B cell (primary cell): ENCODE measurements at regions of chr12 and their contacts with region 1.

Region 1: GRCh38 chr12:110468212-110469048 is at the starts of genes FAM216A and GPN3:
- DNase-seq: peak; percentile 97
- ATAC-seq: peak; percentile 91
- H3K4me3 ChIP-seq: peak within 1 kb of the TSS; percentile 72 to 100 (median 95)
- H3K4me3 Mint-ChIP-seq: peak within 1 kb of the TSS; percentile 100
- H3K27ac ChIP-seq: peak within 1 kb of the TSS; percentile 69 to 79
- H3K27ac Mint-ChIP-seq: peak within 1 kb of the TSS; percentile 98
- H3K4me1 ChIP-seq: peaks cover 22 to 24% of the 10 kb centered on the region in 2 donors
- H3K4me1 Mint-ChIP-seq: peaks cover 42% of the 10 kb centered on the region
- H3K27me3 ChIP-seq: no peaks in the 10 kb centered on the region
- H3K27me3 Mint-ChIP-seq: no peaks in the 10 kb centered on the region
- CTCF ChIP-seq: no peak
- total RNA-seq, gene FAM216A: 15.4 and 15.7 TPM in 2 replicates
- total RNA-seq, gene GPN3: 12.3 and 13.4 TPM in 2 replicates

Region 2: GRCh38 chr12:110367181-110367864 is 101.1 kb before region 1 on chr12:
- CTCF ChIA-PET with region 1: no interaction called
- POLR2A ChIA-PET with region 1: no interaction called
- intact Hi-C with region 1: no loop called
- DNase-seq: no peak
- ATAC-seq: no peak
- H3K4me3 ChIP-seq: no peak overlapping the region
- H3K4me3 Mint-ChIP-seq: peak overlapping the region; percentile 50
- H3K27ac ChIP-seq: no peak overlapping the region
- H3K27ac Mint-ChIP-seq: peak overlapping the region; percentile 61
- H3K4me1 ChIP-seq: peaks cover 18 to 30% of the 10 kb centered on the region in 2 donors
- H3K4me1 Mint-ChIP-seq: peaks cover 40% of the 10 kb centered on the region
- H3K27me3 ChIP-seq: no peaks in the 10 kb centered on the region
- H3K27me3 Mint-ChIP-seq: no peaks in the 10 kb centered on the region
- CTCF ChIP-seq: no peak

Region 3: GRCh38 chr12:110501752-110502738 is 33.6 kb after region 1 on chr12 and contains the starts of genes RAD9B and VPS29:
- CTCF ChIA-PET with region 1: interaction called, 25 read pairs
- POLR2A ChIA-PET with region 1: interaction called, 10 read pairs
- intact Hi-C with region 1: loop called (anchors 1 kb)
- DNase-seq: peak; percentile 99
- ATAC-seq: peak; percentile 94
- H3K4me3 ChIP-seq: peak within 1 kb of the TSS; percentile 90 to 99 (median 95)
- H3K4me3 Mint-ChIP-seq: peak within 1 kb of the TSS; percentile 93
- H3K27ac ChIP-seq: peak within 1 kb of the TSS; percentile 85 to 90
- H3K27ac Mint-ChIP-seq: peak within 1 kb of the TSS; percentile 96
- H3K4me1 ChIP-seq: peaks cover 19 to 20% of the 10 kb centered on the region in 2 donors
- H3K4me1 Mint-ChIP-seq: peaks cover 29% of the 10 kb centered on the region
- H3K27me3 ChIP-seq: no peaks in the 10 kb centered on the region
- H3K27me3 Mint-ChIP-seq: no peaks in the 10 kb centered on the region
- CTCF ChIP-seq: no peak
- total RNA-seq, gene RAD9B: 1.5 and 1.7 TPM in 2 replicates
- total RNA-seq, gene VPS29: 117 and 118 TPM in 2 replicates

Region 4: GRCh38 chr12:110508071-110508586 is 39.7 kb after region 1 on chr12:
- CTCF ChIA-PET with region 1: interaction called, 25 read pairs
- POLR2A ChIA-PET with region 1: interaction called, 4 read pairs
- intact Hi-C with region 1: loop called (anchors 1 kb)
- DNase-seq: no peak
- ATAC-seq: no peak
- H3K4me3 ChIP-seq: no peak overlapping the region
- H3K4me3 Mint-ChIP-seq: no peak overlapping the region
- H3K27ac ChIP-seq: no peak overlapping the region
- H3K27ac Mint-ChIP-seq: no peak overlapping the region
- H3K4me1 ChIP-seq: no peaks in the 10 kb centered on the region
- H3K4me1 Mint-ChIP-seq: no peaks in the 10 kb centered on the region
- H3K27me3 ChIP-seq: no peaks in the 10 kb centered on the region
- H3K27me3 Mint-ChIP-seq: no peaks in the 10 kb centered on the region
- CTCF ChIP-seq: no peak

Region 5: GRCh38 chr12:110606253-110606611 is 137.8 kb after region 1 on chr12:
- CTCF ChIA-PET with region 1: interaction called, 80 read pairs
- POLR2A ChIA-PET with region 1: interaction called, 15 read pairs
- intact Hi-C with region 1: loop called (anchors 1 kb)
- DNase-seq: peak; percentile 43
- ATAC-seq: no peak
- H3K4me3 ChIP-seq: peak overlapping the region; percentile 7 to 74 (median 55)
- H3K4me3 Mint-ChIP-seq: peak overlapping the region; percentile 77
- H3K27ac ChIP-seq: peak overlapping the region; percentile 77 to 94
- H3K27ac Mint-ChIP-seq: peak overlapping the region; percentile 88
- H3K4me1 ChIP-seq: peaks cover 71 to 83% of the 10 kb centered on the region in 2 donors
- H3K4me1 Mint-ChIP-seq: peaks cover 65% of the 10 kb centered on the region
- H3K27me3 ChIP-seq: no peaks in the 10 kb centered on the region
- H3K27me3 Mint-ChIP-seq: no peaks in the 10 kb centered on the region
- CTCF ChIP-seq: no peak

Region 6: GRCh38 chr12:110613771-110614684 is 145.6 kb after region 1 on chr12 and contains the start of gene TCTN1:
- CTCF ChIA-PET with region 1: interaction called, 10 read pairs
- POLR2A ChIA-PET with region 1: no interaction called
- intact Hi-C with region 1: no loop called
- DNase-seq: peak; percentile 94
- ATAC-seq: peak; percentile 99
- H3K4me3 ChIP-seq: peak within 1 kb of the TSS; percentile 57 to 84 (median 70)
- H3K4me3 Mint-ChIP-seq: peak within 1 kb of the TSS; percentile 91
- H3K27ac ChIP-seq: peak within 1 kb of the TSS; percentile 83 to 98
- H3K27ac Mint-ChIP-seq: peak within 1 kb of the TSS; percentile 96
- H3K4me1 ChIP-seq: peaks cover 42 to 65% of the 10 kb centered on the region in 2 donors
- H3K4me1 Mint-ChIP-seq: peaks cover 49% of the 10 kb centered on the region
- H3K27me3 ChIP-seq: no peaks in the 10 kb centered on the region
- H3K27me3 Mint-ChIP-seq: no peaks in the 10 kb centered on the region
- CTCF ChIP-seq: no peak
- total RNA-seq, gene TCTN1: 69.8 and 74.5 TPM in 2 replicates

Region 7: DNA sequence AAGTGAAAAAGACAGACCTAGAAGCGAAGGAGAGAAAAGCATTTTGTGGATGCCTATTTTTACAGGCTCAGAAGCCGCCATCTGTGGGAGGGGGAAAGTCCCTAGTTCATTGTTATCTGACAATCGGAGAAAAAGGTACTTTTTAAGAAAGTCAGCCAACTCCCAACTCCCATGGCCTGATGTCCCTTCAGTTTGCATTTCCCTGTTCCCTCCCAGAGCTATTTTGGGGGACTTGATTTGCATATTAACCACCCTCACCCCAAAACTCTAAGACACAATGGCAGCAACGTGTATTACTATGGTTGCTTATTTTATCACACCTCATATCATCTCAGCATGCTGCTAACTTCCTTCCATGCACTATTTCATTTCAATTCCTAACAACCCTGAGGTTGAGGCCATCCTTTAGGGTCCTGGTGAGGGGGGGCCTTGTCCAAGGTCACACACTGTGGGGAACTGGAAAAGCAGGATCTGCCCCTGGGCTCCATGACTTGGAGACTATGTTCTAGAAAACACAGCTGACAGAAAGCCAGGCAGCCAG is 201.8 kb after region 1 on chr12:
- CTCF ChIA-PET with region 1: no interaction called
- POLR2A ChIA-PET with region 1: no interaction called
- intact Hi-C with region 1: no loop called
- DNase-seq: peak; percentile 84
- ATAC-seq: peak; percentile 46
- H3K4me3 ChIP-seq: peak overlapping the region in 1 of 5 experiments; percentile 15
- H3K4me3 Mint-ChIP-seq: peak overlapping the region; percentile 84
- H3K27ac ChIP-seq: peak overlapping the region; percentile 84 to 99
- H3K27ac Mint-ChIP-seq: peak overlapping the region; percentile 96
- H3K4me1 ChIP-seq: peaks cover 91 to 100% of the 10 kb centered on the region in 2 donors
- H3K4me1 Mint-ChIP-seq: peaks cover 86% of the 10 kb centered on the region
- H3K27me3 ChIP-seq: no peaks in the 10 kb centered on the region
- H3K27me3 Mint-ChIP-seq: no peaks in the 10 kb centered on the region
- CTCF ChIP-seq: no peak

Region 8: DNA sequence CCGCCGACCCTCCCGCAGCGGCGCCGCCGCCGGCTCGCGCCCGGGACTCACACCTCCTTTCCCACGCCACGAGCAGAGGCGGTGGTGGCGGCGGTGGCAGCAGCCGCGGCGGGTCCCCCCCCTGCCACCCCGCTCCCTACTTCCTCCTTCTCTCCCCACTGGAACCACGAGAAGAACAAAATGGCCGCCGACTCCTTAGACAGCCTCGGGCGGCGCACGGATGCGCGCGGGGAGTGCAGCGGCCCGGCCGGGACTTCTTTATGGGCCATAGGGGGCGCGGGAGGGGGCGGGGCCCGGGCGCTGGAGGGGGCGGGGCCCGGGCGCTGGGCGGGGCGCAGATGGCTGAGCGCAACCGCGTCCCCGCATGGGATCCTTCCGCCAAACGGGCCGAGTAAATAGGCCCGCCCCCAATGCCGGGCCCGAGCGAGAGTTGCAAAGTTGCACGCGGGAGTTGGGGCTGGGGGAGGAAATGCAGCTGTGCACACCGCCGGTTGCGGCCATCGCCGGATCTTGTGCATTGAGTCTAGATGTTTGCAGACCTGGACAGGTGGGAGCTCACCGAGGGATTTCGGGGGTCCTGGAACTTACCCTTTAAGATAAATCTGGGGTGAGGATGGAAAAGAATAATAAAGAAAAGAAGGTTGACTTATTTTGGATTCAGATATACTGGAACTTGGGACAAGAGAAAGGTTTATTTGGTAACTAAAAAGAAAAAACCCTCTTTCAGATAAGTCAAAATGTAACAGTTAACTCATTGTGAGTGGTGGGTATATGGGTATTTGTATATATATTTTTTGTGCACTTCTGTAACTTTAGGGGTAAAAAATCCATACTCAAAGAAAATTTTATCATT is 274.5 kb after region 1 on chr12 and contains the start of gene PPP1CC:
- CTCF ChIA-PET with region 1: no interaction called
- POLR2A ChIA-PET with region 1: no interaction called
- intact Hi-C with region 1: loop called (anchors 1 kb)
- DNase-seq: peak; percentile 97
- ATAC-seq: peak; percentile 95
- H3K4me3 ChIP-seq: peak within 1 kb of the TSS; percentile 86 to 94 (median 92)
- H3K4me3 Mint-ChIP-seq: peak within 1 kb of the TSS; percentile 99
- H3K27ac ChIP-seq: peak within 1 kb of the TSS; percentile 31 to 78
- H3K27ac Mint-ChIP-seq: peak within 1 kb of the TSS; percentile 95
- H3K4me1 ChIP-seq: peaks cover 32 to 36% of the 10 kb centered on the region in 2 donors
- H3K4me1 Mint-ChIP-seq: peaks cover 40% of the 10 kb centered on the region
- H3K27me3 ChIP-seq: no peaks in the 10 kb centered on the region
- H3K27me3 Mint-ChIP-seq: no peaks in the 10 kb centered on the region
- CTCF ChIP-seq: no peak
- total RNA-seq, gene PPP1CC: 146 and 150 TPM in 2 replicates

Region 9: GRCh38 chr12:110888256-110888991 is 420.0 kb after region 1 on chr12:
- CTCF ChIA-PET with region 1: interaction called, 14 read pairs
- POLR2A ChIA-PET with region 1: no interaction called
- intact Hi-C with region 1: loop called (anchors 1 kb)
- DNase-seq: no peak
- ATAC-seq: no peak
- H3K4me3 ChIP-seq: peak overlapping the region in 1 of 5 experiments; percentile 62
- H3K4me3 Mint-ChIP-seq: peak overlapping the region; percentile 95
- H3K27ac ChIP-seq: no peak overlapping the region
- H3K27ac Mint-ChIP-seq: peak overlapping the region; percentile 43
- H3K4me1 ChIP-seq: peaks cover 0 to 10% of the 10 kb centered on the region in 2 donors
- H3K4me1 Mint-ChIP-seq: peaks cover 4% of the 10 kb centered on the region
- H3K27me3 ChIP-seq: no peaks in the 10 kb centered on the region
- H3K27me3 Mint-ChIP-seq: no peaks in the 10 kb centered on the region
- CTCF ChIP-seq: peak; percentile 62